Naive thymus-derived CD4-positive, alpha-beta T cell (primary cell): ENCODE measurements at regions of chr5 and their contacts with region 1.

Region 1: GRCh38 chr5:144191998-144192397 is 21.3 kb downstream of the KCTD16 start:
- DNase-seq: peak in 7 of 9 donors; percentile 72 to 88 (median 85)
- ATAC-seq: peak; percentile 73
- H3K4me3 ChIP-seq: peak overlapping the region; percentile 2
- H3K4me3 Mint-ChIP-seq: no peak overlapping the region
- H3K27ac ChIP-seq: peak overlapping the region; percentile 67
- H3K27ac Mint-ChIP-seq: no peak overlapping the region
- H3K4me1 ChIP-seq: peaks cover 50 to 51% of the 10 kb centered on the region in 2 donors
- H3K4me1 Mint-ChIP-seq: peaks cover 22 to 45% (median 23%) of the 10 kb centered on the region in 7 donors
- H3K27me3 ChIP-seq: no peaks in the 10 kb centered on the region
- H3K27me3 Mint-ChIP-seq: peaks cover 0 to 2% (median 0%) of the 10 kb centered on the region in 5 donors

Region 2: GRCh38 chr5:142356716-142357473 is 1835.1 kb before region 1 on chr5:
- CTCF ChIA-PET with region 1: no interaction called
- POLR2A ChIA-PET with region 1: interaction called, 3 read pairs
- intact Hi-C with region 1: loop called in 1 of 2 experiments (anchors 5 kb)
- DNase-seq: peak; percentile 69 to 96 (median 88)
- ATAC-seq: peak; percentile 95
- H3K4me3 ChIP-seq: peak overlapping the region; percentile 62
- H3K4me3 Mint-ChIP-seq: peak overlapping the region; percentile 78 to 88 (median 86)
- H3K27ac ChIP-seq: peak overlapping the region; percentile 35
- H3K27ac Mint-ChIP-seq: peak overlapping the region; percentile 58 to 93 (median 86)
- H3K4me1 ChIP-seq: peaks cover 15 to 35% of the 10 kb centered on the region in 2 donors
- H3K4me1 Mint-ChIP-seq: peaks cover 24 to 64% (median 53%) of the 10 kb centered on the region in 7 donors
- H3K27me3 ChIP-seq: no peaks in the 10 kb centered on the region
- H3K27me3 Mint-ChIP-seq: peaks cover 0 to 12% (median 0%) of the 10 kb centered on the region in 5 donors

Region 3: DNA sequence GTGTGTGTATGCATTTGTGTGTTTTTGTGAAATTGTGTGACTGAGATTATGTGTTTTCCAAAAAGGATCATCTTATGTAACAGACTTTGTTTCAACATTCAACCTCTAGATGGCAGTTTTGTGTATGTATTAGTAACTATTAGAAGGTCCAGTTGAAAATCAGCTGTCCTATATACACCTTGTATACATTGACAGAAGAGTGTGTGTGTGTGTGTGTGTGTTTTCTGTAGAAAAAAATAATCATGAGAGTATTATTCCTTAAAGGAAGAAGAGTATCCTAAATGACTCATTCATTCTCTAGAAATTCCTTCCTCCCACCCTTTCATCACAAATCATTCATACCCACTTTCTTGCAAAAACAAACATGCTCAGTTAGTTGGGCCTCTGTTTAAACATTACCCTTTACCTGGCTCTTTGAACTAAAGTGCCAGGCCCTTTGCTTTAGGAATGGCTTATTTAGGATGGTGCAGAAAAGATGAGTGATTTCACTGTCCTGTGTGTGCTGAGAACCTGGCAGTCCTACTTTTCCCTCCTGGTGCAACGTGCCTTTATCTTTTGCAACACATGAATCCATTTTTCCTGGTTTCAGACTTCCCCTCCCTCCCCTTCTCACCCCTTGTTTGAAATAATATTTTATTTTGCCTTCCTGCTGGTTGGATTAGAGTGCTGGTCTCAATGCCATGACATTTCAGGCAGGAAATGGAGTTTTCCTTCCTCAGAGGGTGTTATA is 1269.6 kb before region 1 on chr5:
- CTCF ChIA-PET with region 1: interaction called, 3 read pairs
- POLR2A ChIA-PET with region 1: no interaction called
- intact Hi-C with region 1: loop called (anchors 1 to 5 kb)
- DNase-seq: peak in 1 of 9 donors; percentile 3
- ATAC-seq: peak; percentile 50
- H3K4me3 ChIP-seq: no peak overlapping the region
- H3K4me3 Mint-ChIP-seq: no peak overlapping the region
- H3K27ac ChIP-seq: no peak overlapping the region
- H3K27ac Mint-ChIP-seq: peak overlapping the region in 2 of 9 donors; percentile 9 to 19
- H3K4me1 ChIP-seq: peaks cover 0 to 19% of the 10 kb centered on the region in 2 donors
- H3K4me1 Mint-ChIP-seq: peaks cover 7 to 40% (median 11%) of the 10 kb centered on the region in 7 donors
- H3K27me3 ChIP-seq: no peaks in the 10 kb centered on the region
- H3K27me3 Mint-ChIP-seq: no peaks in the 10 kb centered on the region

Region 4: GRCh38 chr5:143314659-143315058 is 877.3 kb before region 1 on chr5:
- CTCF ChIA-PET with region 1: no interaction called
- POLR2A ChIA-PET with region 1: no interaction called
- intact Hi-C with region 1: loop called in 1 of 2 experiments (anchors 10 kb)
- DNase-seq: no peak
- ATAC-seq: no peak
- H3K4me3 ChIP-seq: no peak overlapping the region
- H3K4me3 Mint-ChIP-seq: no peak overlapping the region
- H3K27ac ChIP-seq: no peak overlapping the region
- H3K27ac Mint-ChIP-seq: peak overlapping the region in 2 of 9 donors; percentile 40 to 59
- H3K4me1 ChIP-seq: no peaks in the 10 kb centered on the region
- H3K4me1 Mint-ChIP-seq: peaks cover 10 to 38% (median 26%) of the 10 kb centered on the region in 7 donors
- H3K27me3 ChIP-seq: no peaks in the 10 kb centered on the region
- H3K27me3 Mint-ChIP-seq: no peaks in the 10 kb centered on the region

Region 5: DNA sequence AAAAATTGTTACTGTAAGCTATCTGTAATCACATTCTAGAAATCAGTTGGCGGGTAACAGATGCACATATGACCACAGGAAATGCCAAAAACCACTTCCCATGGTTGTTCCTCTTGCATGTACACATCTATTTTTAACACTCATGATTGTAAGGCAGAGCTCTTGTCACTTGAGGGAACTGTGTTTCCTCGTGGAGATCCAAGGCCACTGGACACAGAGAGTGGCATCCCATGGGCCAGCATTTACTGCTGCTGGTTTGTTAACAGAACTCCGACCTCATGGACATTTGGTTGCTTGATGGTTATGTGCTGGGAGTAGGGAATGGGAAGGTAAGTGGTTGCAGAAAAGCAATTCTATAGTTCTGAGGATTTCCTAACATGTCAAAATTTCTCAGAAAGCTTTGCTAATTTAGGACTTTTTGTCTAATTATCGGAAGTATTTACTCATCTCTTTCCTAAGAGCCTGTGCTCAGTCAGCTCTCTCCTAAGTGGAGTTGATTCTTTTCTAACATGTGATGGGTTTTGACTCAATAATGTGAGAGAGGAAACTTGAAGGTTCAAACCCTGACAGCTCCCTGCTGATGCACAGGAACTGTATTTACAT is 586.5 kb before region 1 on chr5:
- CTCF ChIA-PET with region 1: no interaction called
- POLR2A ChIA-PET with region 1: no interaction called
- intact Hi-C with region 1: loop called in 1 of 2 experiments (anchors 10 kb)
- DNase-seq: peak in 3 of 9 donors; percentile 12 to 16 (median 13)
- ATAC-seq: peak; percentile 69
- H3K4me3 ChIP-seq: no peak overlapping the region
- H3K4me3 Mint-ChIP-seq: peak overlapping the region in 2 of 10 donors; percentile 57 to 84
- H3K27ac ChIP-seq: no peak overlapping the region
- H3K27ac Mint-ChIP-seq: peak overlapping the region in 2 of 9 donors; percentile 51 to 93
- H3K4me1 ChIP-seq: peaks cover 6 to 22% of the 10 kb centered on the region in 2 donors
- H3K4me1 Mint-ChIP-seq: peaks cover 24 to 36% (median 27%) of the 10 kb centered on the region in 7 donors
- H3K27me3 ChIP-seq: no peaks in the 10 kb centered on the region
- H3K27me3 Mint-ChIP-seq: peaks cover 6 to 25% (median 18%) of the 10 kb centered on the region in 5 donors

Region 6: DNA sequence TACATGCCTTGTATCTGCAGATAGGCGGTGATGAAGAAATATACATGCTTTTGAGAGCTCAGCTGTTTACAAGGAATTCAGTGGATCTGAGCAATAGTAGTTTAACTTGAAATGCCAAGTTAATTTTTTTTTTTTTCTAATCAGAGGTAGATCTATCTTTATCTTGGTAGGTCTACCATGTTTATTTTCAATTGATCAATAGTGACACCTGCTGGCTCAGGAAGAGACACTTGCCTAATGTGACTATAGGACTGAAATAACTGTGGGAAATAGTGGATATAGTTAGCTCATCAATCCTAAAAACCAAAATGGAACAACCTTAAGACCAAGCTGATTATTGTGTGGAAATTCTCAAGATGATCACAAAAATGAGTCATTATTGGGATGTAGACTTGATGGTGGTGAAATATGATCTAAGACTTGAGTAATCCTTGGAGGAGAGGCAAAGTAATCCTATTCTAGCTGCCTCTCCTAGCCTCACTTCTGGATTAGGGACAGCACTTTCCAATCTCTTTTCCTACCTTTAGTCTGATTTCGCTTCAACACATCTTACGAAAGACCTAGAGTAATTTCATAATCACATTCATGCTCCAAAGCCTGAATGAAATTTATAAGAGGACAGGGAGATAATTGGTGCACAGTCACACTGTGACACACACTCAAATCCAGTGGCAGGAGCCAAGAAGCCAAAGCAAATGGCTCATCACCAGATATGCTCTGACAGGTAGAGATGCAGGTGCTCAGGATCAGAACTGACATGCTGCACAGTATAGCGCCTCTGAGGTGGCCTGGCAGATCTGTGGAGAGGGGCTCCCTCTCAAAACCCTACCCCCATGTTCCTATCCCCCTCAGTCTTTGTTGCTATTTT is 223.8 kb before region 1 on chr5:
- CTCF ChIA-PET with region 1: interaction called, 4 read pairs
- POLR2A ChIA-PET with region 1: no interaction called
- intact Hi-C with region 1: loop called (anchors 2 to 5 kb)
- DNase-seq: peak in 6 of 9 donors; percentile 13 to 43 (median 27)
- ATAC-seq: no peak
- H3K4me3 ChIP-seq: no peak overlapping the region
- H3K4me3 Mint-ChIP-seq: no peak overlapping the region
- H3K27ac ChIP-seq: no peak overlapping the region
- H3K27ac Mint-ChIP-seq: no peak overlapping the region
- H3K4me1 ChIP-seq: no peaks in the 10 kb centered on the region
- H3K4me1 Mint-ChIP-seq: peaks cover 0 to 6% (median 0%) of the 10 kb centered on the region in 7 donors
- H3K27me3 ChIP-seq: no peaks in the 10 kb centered on the region
- H3K27me3 Mint-ChIP-seq: peaks cover 6 to 27% (median 22%) of the 10 kb centered on the region in 5 donors

Region 7: GRCh38 chr5:146179696-146180095 is 1987.7 kb after region 1 on chr5:
- CTCF ChIA-PET with region 1: no interaction called
- POLR2A ChIA-PET with region 1: no interaction called
- intact Hi-C with region 1: loop called (anchors 2 to 5 kb)
- DNase-seq: no peak
- ATAC-seq: no peak
- H3K4me3 ChIP-seq: no peak overlapping the region
- H3K4me3 Mint-ChIP-seq: peak overlapping the region in 7 of 10 donors; percentile 16 to 90 (median 29)
- H3K27ac ChIP-seq: no peak overlapping the region
- H3K27ac Mint-ChIP-seq: peak overlapping the region in 1 of 9 donors; percentile 52
- H3K4me1 ChIP-seq: peaks cover 3 to 4% of the 10 kb centered on the region in 2 donors
- H3K4me1 Mint-ChIP-seq: peaks cover 12 to 42% (median 31%) of the 10 kb centered on the region in 7 donors
- H3K27me3 ChIP-seq: no peaks in the 10 kb centered on the region
- H3K27me3 Mint-ChIP-seq: no peaks in the 10 kb centered on the region